PC-3 (cell line): ENCODE measurements at regions of chr13 and their contacts with region 1.

Region 1: GRCh38 chr13:109145631-109146030 is 516.2 kb downstream of the MYO16 start:
- DNase-seq: peak; percentile 74
- ATAC-seq: peak; percentile 73
- H3K4me3 ChIP-seq: no peak overlapping the region
- H3K27ac ChIP-seq: 0 out of 2 replicates have a peak overlapping the region, but pooled peaks have one; percentile 6
- H3K4me1 ChIP-seq: peaks cover 39% of the 10 kb centered on the region
- H3K27me3 ChIP-seq: no peaks in the 10 kb centered on the region
- CTCF ChIP-seq: peak; percentile 87

Region 2: GRCh38 chr13:108915634-108916512 is 229.8 kb before region 1 on chr13:
- CTCF ChIA-PET with region 1: no interaction called
- POLR2A ChIA-PET with region 1: no interaction called
- intact Hi-C with region 1: loop called (anchors 5 kb)
- DNase-seq: peak; percentile 86
- ATAC-seq: peak; percentile 60
- H3K4me3 ChIP-seq: peak overlapping the region; percentile 53
- H3K27ac ChIP-seq: peak overlapping the region; percentile 73
- H3K4me1 ChIP-seq: peaks cover 51% of the 10 kb centered on the region
- H3K27me3 ChIP-seq: no peaks in the 10 kb centered on the region
- CTCF ChIP-seq: no peak

Region 3: DNA sequence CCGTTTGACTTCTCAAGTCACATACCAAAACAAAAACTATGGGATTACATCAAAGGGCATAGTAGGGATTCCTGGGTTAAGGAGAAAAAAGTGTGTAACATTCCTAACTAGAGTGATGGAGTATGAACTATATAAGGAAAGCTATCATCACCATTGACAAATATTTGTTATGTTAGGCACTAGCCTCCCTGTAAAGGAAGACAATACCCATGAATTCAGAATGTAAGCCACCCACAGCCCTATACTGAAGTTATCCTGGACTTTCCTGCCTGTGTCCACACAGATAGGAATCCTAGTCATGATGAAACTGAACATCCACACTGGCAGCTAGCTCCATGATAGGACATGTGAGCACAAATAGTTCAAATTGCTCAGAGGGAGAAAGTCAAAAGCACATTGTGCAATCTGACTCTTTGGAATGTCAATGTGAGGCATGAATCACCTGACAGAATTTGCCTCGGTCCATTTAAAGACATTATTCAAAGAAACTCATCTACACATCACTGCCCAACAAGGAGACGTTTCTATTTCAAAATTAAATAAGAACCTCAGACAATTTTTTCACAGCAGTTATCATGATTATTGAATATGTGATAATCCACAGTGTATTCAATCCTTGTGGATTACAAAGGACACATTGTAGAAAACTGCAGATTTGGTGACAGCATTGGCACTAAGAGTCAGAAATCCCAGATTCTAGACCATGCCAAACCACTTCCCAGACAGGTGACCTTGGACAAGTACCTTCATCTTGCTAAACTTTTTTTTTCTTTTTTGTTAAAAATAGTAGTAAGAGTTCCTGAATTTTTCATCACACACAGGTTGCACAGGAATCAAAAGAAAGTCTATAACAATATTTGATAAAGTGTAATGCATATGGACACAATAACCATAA is 111.5 kb after region 1 on chr13:
- CTCF ChIA-PET with region 1: no interaction called
- POLR2A ChIA-PET with region 1: no interaction called
- intact Hi-C with region 1: loop called (anchors 5 kb)
- DNase-seq: peak; percentile 93
- ATAC-seq: peak; percentile 88
- H3K4me3 ChIP-seq: no peak overlapping the region
- H3K27ac ChIP-seq: peak overlapping the region; percentile 85
- H3K4me1 ChIP-seq: peaks cover 32% of the 10 kb centered on the region
- H3K27me3 ChIP-seq: no peaks in the 10 kb centered on the region
- CTCF ChIP-seq: no peak

Region 4: GRCh38 chr13:109344552-109345157 is 199.0 kb after region 1 on chr13:
- CTCF ChIA-PET with region 1: no interaction called
- POLR2A ChIA-PET with region 1: no interaction called
- intact Hi-C with region 1: loop called (anchors 5 kb)
- DNase-seq: peak; percentile 55
- ATAC-seq: peak; percentile 66
- H3K4me3 ChIP-seq: no peak overlapping the region
- H3K27ac ChIP-seq: no peak overlapping the region
- H3K4me1 ChIP-seq: peaks cover 34% of the 10 kb centered on the region
- H3K27me3 ChIP-seq: no peaks in the 10 kb centered on the region
- CTCF ChIP-seq: no peak

Region 5: DNA sequence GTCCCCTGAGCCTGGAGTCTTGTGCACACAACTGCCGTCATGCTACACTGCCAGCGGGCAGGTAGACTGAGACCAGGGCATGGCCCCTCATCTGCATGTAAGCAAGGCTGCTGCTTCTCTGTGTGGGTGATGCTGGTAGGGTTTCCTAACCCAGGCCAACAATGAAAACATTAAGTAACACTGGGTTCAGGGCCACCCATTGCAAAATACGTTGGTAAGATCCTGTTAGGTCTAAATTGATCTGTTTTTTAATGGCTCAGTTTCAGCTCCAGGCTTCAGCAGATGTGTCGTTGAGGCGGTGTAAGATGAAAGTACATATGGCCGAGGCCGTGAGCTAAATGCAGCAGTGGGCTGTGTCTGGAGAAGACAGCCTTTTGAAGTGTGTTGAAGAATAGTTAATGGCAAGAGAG is 257.4 kb after region 1 on chr13:
- CTCF ChIA-PET with region 1: no interaction called
- POLR2A ChIA-PET with region 1: no interaction called
- intact Hi-C with region 1: no loop called
- DNase-seq: no peak
- ATAC-seq: no peak
- H3K4me3 ChIP-seq: no peak overlapping the region
- H3K27ac ChIP-seq: no peak overlapping the region
- H3K4me1 ChIP-seq: no peaks in the 10 kb centered on the region
- H3K27me3 ChIP-seq: no peaks in the 10 kb centered on the region
- CTCF ChIP-seq: no peak

Region 6: GRCh38 chr13:109569958-109570711 is 424.5 kb after region 1 on chr13:
- CTCF ChIA-PET with region 1: no interaction called
- POLR2A ChIA-PET with region 1: no interaction called
- intact Hi-C with region 1: loop called (anchors 2 kb)
- DNase-seq: no peak
- ATAC-seq: no peak
- H3K4me3 ChIP-seq: no peak overlapping the region
- H3K27ac ChIP-seq: no peak overlapping the region
- H3K4me1 ChIP-seq: no peaks in the 10 kb centered on the region
- H3K27me3 ChIP-seq: no peaks in the 10 kb centered on the region
- CTCF ChIP-seq: no peak

Region 7: DNA sequence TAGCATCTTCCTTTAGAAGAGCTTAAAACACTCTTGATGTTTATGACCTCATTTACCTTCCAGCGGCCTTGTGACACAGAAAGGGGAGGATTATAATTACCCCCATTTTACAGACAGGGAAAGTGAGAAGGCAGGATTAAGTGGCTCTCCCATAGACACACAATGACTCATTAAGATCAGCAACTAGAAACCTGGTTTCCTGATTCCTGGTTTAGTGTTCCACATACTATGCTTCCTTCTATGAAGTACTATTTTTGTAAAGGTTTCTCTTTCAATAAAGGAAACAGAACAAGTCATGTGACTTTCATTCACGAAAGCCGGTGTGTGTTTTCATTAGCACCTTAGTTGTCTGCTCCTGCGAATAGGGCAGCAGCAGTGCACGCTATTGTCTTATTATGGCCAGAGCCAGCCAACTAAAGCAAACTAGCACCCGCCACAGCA is 632.5 kb after region 1 on chr13:
- CTCF ChIA-PET with region 1: no interaction called
- POLR2A ChIA-PET with region 1: no interaction called
- intact Hi-C with region 1: loop called (anchors 2 kb)
- DNase-seq: peak; percentile 56
- ATAC-seq: peak; percentile 39
- H3K4me3 ChIP-seq: peak overlapping the region; percentile 57
- H3K27ac ChIP-seq: peak overlapping the region; percentile 34
- H3K4me1 ChIP-seq: peaks cover 54% of the 10 kb centered on the region
- H3K27me3 ChIP-seq: no peaks in the 10 kb centered on the region
- CTCF ChIP-seq: no peak